Activated naive CD4-positive, alpha-beta T cell treated with anti-CD3 and anti-CD28 coated beads for 36 hours (primary cell): ENCODE measurements at regions of chr1 and their contacts with region 1.

Region 1: DNA sequence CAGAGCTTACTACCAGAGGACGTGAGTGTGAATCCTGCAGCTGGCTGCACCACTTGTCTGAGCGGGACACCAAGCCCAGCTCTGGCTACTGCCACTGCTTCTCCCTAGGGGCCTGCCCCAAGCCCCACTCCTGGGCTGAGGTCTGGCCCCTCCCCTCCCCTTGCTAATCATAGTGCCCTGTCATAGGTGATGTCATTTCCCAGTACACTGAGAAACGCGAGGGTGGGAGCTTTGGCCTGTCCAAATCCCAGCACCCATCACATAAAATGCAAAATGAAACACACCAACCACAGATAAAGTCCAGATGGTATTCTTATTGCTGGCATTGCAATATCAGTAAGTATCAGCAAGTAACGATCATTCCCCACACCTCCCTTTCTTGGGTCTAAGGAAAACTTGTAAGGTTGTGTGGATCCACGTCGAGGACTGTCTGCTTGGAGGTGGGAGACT is 77.7 kb downstream of the TOMM20 start:
- DNase-seq: peak; percentile 37
- H3K4me3 Mint-ChIP-seq: no peak overlapping the region
- H3K27ac Mint-ChIP-seq: no peak overlapping the region
- H3K4me1 Mint-ChIP-seq: peaks cover 25% of the 10 kb centered on the region
- H3K27me3 Mint-ChIP-seq: no peaks in the 10 kb centered on the region

Region 2: DNA sequence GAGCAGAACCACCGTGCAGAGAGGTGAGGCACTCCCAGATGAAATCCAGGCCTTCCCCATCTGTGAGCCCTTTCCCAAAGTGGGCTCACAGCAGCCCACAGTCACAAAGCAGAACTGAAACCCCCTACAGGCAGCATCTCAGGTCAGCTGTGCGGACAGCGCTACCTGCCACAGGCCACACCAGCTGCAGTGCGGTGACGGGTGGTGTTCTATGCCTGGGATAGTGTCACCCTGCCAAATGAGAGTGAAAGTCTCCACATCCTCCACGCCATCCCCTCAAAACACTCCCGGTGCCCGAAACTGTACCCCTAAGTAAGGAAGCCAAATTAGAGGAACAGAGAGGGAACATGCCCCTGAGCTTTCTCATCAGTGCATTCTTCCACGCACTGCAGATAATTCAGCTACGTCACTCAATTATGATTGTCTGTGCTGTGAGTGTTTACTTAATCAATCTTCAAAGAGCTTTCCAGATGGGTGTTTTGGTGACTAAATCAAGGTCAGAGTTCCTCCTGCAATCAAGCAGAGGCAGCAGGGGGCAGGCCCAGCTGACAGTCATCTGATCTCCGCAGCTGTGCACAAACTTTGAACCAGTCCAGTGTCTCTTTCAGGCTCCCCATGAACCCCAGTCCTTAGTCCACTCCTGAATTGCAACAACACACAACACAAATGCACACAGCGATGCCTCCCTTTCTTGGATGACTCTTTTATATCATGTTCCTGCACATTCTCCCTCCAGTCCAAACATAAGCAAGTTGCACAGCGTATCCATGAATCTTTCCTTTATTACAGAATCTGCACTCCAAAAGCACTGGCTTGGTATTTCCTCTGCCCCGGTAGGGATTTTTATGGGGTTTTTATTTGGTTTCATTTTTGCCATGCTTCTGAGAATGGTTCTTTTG is 72.3 kb before region 1 on chr1:
- CTCF ChIA-PET with region 1: no interaction called
- intact Hi-C with region 1: loop called (anchors 2 kb)
- DNase-seq: peak; percentile 81
- H3K4me3 Mint-ChIP-seq: peak overlapping the region; percentile 79
- H3K27ac Mint-ChIP-seq: peak overlapping the region; percentile 97
- H3K4me1 Mint-ChIP-seq: peaks cover 59% of the 10 kb centered on the region
- H3K27me3 Mint-ChIP-seq: no peaks in the 10 kb centered on the region

Region 3: GRCh38 chr1:234989019-234989418 is 61.9 kb before region 1 on chr1:
- CTCF ChIA-PET with region 1: no interaction called
- intact Hi-C with region 1: no loop called
- DNase-seq: no peak
- H3K4me3 Mint-ChIP-seq: no peak overlapping the region
- H3K27ac Mint-ChIP-seq: peak overlapping the region; percentile 15
- H3K4me1 Mint-ChIP-seq: peaks cover 66% of the 10 kb centered on the region
- H3K27me3 Mint-ChIP-seq: no peaks in the 10 kb centered on the region

Region 4: GRCh38 chr1:235075188-235075926 is 24.4 kb after region 1 on chr1:
- CTCF ChIA-PET with region 1: no interaction called
- intact Hi-C with region 1: loop called (anchors 2 kb)
- DNase-seq: peak; percentile 83
- H3K4me3 Mint-ChIP-seq: peak overlapping the region; percentile 0
- H3K27ac Mint-ChIP-seq: peak overlapping the region; percentile 90
- H3K4me1 Mint-ChIP-seq: peaks cover 36% of the 10 kb centered on the region
- H3K27me3 Mint-ChIP-seq: no peaks in the 10 kb centered on the region